ENCODE measurements at regions of chr12 and their contacts with region 1.

Region 1: GRCh38 chr12:68158432-68158831 is 1.1 kb downstream of the IFNG start:
- DNase-seq: peak in 5 of 9 donors; percentile 20 to 48 (median 23)
- ATAC-seq: peak; percentile 77
- H3K4me3 ChIP-seq: peak overlapping the region; percentile 4
- H3K4me3 Mint-ChIP-seq: peak overlapping the region in 2 of 10 donors; percentile 26 to 60
- H3K27ac ChIP-seq: no peak overlapping the region
- H3K27ac Mint-ChIP-seq: no peak overlapping the region
- H3K4me1 ChIP-seq: peaks cover 0 to 37% of the 10 kb centered on the region in 2 donors
- H3K4me1 Mint-ChIP-seq: peaks cover 0 to 30% (median 0%) of the 10 kb centered on the region in 7 donors
- H3K27me3 ChIP-seq: no peaks in the 10 kb centered on the region
- H3K27me3 Mint-ChIP-seq: peaks cover 0 to 3% (median 0%) of the 10 kb centered on the region in 5 donors

Region 2: DNA sequence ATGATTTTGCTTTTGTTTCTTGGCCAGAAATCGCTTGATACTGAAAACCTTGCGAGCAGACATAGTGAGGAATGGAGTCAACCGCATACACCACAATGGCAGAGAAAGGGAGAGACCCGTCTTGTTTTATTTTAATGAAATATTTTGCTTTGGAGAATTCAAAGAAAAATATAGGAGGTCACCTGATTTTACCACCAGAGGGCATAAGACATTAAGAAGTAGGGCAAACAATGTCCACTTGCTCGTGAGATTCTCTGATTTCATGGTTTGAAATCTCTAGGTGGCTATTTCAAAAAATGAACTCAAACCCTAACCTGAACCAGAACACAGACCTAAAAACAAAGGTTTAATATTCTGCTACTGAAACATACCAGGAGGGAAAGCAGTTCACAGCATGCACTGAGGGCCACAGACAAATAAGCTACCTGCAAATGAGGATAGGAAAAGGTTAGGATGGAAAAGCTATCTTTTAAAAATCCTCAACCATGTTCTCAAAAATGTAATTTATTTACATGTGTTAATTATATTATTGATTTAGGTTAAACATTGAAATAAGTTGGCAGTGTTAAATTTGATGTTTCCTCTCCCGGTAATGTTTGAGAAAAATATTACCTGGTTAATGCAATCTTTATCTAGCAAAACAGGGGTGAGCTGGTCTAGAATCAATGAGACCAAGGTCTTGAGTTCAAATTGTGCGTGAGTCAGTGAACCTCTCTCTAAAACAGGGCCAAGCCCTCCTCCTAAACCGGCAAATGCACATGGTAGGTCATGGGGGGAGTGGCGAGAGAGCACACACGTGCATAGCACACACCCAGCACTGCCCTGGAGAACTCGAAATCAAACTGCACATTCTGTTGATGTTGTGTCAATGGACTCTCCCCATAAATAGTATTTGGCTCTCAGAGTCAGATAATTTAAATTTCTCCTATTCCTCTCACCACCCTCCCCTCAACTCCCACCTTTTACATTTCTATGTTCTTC is 156.7 kb before region 1 on chr12:
- CTCF ChIA-PET with region 1: no interaction called
- POLR2A ChIA-PET with region 1: no interaction called
- intact Hi-C with region 1: loop called in 1 of 2 experiments (anchors 5 kb)
- DNase-seq: no peak
- ATAC-seq: no peak
- H3K4me3 ChIP-seq: no peak overlapping the region
- H3K4me3 Mint-ChIP-seq: no peak overlapping the region
- H3K27ac ChIP-seq: no peak overlapping the region
- H3K27ac Mint-ChIP-seq: no peak overlapping the region
- H3K4me1 ChIP-seq: peaks cover 0 to 4% of the 10 kb centered on the region in 2 donors
- H3K4me1 Mint-ChIP-seq: peaks cover 4 to 14% (median 7%) of the 10 kb centered on the region in 7 donors
- H3K27me3 ChIP-seq: no peaks in the 10 kb centered on the region
- H3K27me3 Mint-ChIP-seq: no peaks in the 10 kb centered on the region

Region 3: DNA sequence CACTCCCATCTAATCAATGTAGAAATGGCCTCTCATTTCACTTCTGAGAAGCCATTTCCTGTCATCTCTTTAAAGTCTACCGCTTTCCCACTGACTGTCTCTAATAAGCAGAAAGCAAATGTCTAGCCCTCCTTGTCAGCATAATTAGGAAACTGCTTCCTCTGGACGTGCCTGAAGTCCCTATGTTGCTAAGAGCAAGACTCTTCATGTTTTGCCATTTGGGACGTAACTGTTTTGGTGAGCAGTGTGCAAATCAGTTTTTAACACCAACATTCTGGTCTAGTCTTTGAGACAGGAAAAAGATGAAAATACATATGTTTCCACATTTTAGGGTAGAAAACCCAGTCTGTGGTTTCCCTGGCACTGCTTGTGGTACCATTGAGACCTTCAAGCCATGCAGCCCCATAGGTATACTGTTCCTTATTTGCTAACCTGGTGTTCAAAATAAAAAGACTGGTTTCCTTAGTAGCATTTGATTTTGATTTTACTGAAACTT is 21.0 kb before region 1 on chr12:
- CTCF ChIA-PET with region 1: interaction called, 3 read pairs
- POLR2A ChIA-PET with region 1: no interaction called
- intact Hi-C with region 1: loop called in 1 of 2 experiments (anchors 2 kb)
- DNase-seq: peak in 5 of 9 donors; percentile 6 to 22 (median 10)
- ATAC-seq: peak; percentile 26
- H3K4me3 ChIP-seq: no peak overlapping the region
- H3K4me3 Mint-ChIP-seq: peak overlapping the region; percentile 4 to 71 (median 51)
- H3K27ac ChIP-seq: no peak overlapping the region
- H3K27ac Mint-ChIP-seq: peak overlapping the region in 7 of 9 donors; percentile 33 to 90 (median 65)
- H3K4me1 ChIP-seq: peaks cover 16 to 17% of the 10 kb centered on the region in 2 donors
- H3K4me1 Mint-ChIP-seq: peaks cover 8 to 56% (median 43%) of the 10 kb centered on the region in 7 donors
- H3K27me3 ChIP-seq: no peaks in the 10 kb centered on the region
- H3K27me3 Mint-ChIP-seq: no peaks in the 10 kb centered on the region

Region 4: DNA sequence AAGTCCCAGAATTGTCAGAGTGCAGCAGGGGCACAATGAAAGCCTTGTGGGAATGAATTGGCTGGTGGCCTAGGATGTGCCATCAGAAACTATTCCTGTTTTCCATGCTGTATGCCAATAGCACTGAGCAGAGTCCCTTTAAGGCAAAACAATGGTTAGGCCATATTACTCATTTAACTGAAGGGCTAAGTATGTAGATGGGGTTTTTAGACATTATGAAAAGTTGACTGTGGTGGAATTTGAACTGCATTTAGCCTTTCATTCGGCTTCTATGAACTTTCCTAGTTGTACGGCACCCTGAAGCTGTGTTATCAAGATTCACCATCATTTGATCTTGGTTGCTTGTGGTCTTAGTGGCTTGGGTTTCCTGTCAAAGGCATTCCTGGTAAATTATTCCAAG is 42.4 kb after region 1 on chr12:
- CTCF ChIA-PET with region 1: no interaction called
- POLR2A ChIA-PET with region 1: no interaction called
- intact Hi-C with region 1: loop called in 1 of 2 experiments (anchors 5 kb)
- DNase-seq: no peak
- ATAC-seq: no peak
- H3K4me3 ChIP-seq: no peak overlapping the region
- H3K4me3 Mint-ChIP-seq: peak overlapping the region in 4 of 10 donors; percentile 14 to 65 (median 32)
- H3K27ac ChIP-seq: no peak overlapping the region
- H3K27ac Mint-ChIP-seq: peak overlapping the region in 1 of 9 donors; percentile 28
- H3K4me1 ChIP-seq: peaks cover 14 to 21% of the 10 kb centered on the region in 2 donors
- H3K4me1 Mint-ChIP-seq: peaks cover 5 to 42% (median 28%) of the 10 kb centered on the region in 7 donors
- H3K27me3 ChIP-seq: no peaks in the 10 kb centered on the region
- H3K27me3 Mint-ChIP-seq: peaks cover 0 to 9% (median 0%) of the 10 kb centered on the region in 5 donors

Region 5: DNA sequence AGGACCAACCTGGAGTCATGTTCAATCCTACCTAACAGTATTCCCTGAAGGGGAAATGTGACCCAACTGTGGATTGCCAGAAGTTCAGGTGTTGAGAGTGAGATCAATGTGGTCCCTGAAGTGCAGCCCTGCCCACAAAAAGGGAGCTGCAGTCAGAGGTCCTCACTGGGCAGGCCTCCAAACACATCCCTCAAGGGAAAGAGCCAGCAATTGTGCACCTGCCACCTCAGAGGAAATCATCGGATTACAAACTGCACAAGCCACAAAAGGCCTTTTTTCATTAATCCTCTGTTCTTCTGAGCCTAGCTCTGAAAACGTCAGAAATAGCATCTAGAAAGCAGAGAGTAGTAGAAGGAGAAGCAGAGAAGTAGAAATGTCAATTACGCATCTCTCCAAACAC is 184.5 kb after region 1 on chr12:
- CTCF ChIA-PET with region 1: no interaction called
- POLR2A ChIA-PET with region 1: no interaction called
- intact Hi-C with region 1: no loop called
- DNase-seq: no peak
- ATAC-seq: no peak
- H3K4me3 ChIP-seq: no peak overlapping the region
- H3K4me3 Mint-ChIP-seq: no peak overlapping the region
- H3K27ac ChIP-seq: no peak overlapping the region
- H3K27ac Mint-ChIP-seq: no peak overlapping the region
- H3K4me1 ChIP-seq: no peaks in the 10 kb centered on the region
- H3K4me1 Mint-ChIP-seq: peaks cover 7 to 24% (median 13%) of the 10 kb centered on the region in 7 donors
- H3K27me3 ChIP-seq: no peaks in the 10 kb centered on the region
- H3K27me3 Mint-ChIP-seq: peaks cover 0 to 31% (median 0%) of the 10 kb centered on the region in 5 donors